Activated CD4-positive, alpha-beta memory T cell treated with anti-CD3 and anti-CD28 coated beads for 36 hours (primary cell): ENCODE measurements at regions of chr1 and their contacts with region 1.

Region 1: DNA sequence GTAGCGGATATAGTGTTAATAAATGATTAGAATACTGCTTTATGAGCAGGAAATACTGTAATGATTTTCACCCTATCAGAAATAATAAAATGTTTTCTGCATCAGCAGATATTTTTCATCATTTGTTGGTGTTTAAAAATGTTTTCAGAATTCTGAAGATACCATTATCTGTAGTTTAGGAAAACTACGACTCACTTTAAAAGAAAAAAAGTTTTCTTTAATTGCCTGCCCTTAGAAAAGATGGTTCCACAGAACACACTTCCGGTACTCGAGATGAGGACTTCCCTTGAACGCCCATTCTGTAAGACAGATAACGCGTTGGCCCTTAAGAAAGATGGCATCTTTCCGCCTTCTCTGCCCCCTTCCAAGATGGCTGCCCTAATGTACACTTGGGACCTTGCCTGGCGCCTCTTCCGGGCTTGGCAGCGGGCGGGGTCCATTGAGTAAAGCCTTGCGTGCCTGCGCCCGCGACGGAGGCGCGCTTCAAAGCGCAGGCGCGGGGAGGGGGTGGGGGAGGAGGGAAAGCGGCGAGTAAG is at the start of gene SZRD1:
- DNase-seq: peak; percentile 98
- H3K4me3 Mint-ChIP-seq: peak within 1 kb of the TSS; percentile 97
- H3K27ac Mint-ChIP-seq: peak within 1 kb of the TSS; percentile 100
- H3K4me1 Mint-ChIP-seq: peaks cover 27% of the 10 kb centered on the region
- H3K27me3 Mint-ChIP-seq: no peaks in the 10 kb centered on the region
- total RNA-seq, gene SZRD1: 185 to 191 TPM

Region 2: DNA sequence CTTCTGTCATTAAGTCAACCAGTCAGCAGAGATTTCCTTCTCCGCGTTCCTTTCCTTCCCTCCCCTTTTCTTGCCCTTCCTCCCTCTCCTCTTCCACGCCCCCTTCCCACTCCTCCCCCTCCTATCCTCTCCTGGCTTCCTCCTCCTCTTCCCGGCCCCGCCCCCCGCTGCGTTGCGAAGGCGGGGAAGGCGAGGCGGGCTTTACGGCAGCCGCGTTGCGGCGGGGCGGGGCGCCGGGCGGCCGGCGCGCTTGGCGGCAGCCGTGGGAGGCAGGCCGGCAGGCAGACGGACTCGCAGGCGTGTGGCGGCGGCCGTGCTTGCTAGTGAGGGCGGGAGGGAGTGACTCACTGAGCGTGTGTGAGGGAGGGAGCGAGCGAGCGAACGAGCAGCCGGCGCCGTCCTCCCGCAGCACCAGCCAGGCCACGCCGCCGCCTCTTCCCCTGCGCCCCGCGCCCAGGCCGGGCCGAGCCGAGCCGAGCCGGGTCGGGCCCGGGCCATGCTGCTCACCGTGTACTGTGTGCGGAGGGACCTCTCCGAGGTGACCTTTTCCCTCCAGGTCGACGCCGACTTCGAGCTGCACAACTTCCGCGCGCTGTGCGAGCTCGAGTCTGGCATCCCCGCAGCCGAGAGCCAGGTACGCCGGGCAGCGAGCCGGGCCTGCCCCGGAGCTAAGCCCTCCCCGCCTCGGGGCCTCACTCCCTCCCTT is 749.5 kb before region 1 on chr1 and contains the start of gene DDI2:
- CTCF ChIA-PET with region 1: no interaction called
- POLR2A ChIA-PET with region 1: no interaction called
- intact Hi-C with region 1: loop called (anchors 10 kb)
- DNase-seq: peak; percentile 96
- H3K4me3 Mint-ChIP-seq: peak within 1 kb of the TSS; percentile 95
- H3K27ac Mint-ChIP-seq: peak within 1 kb of the TSS; percentile 93
- H3K4me1 Mint-ChIP-seq: peaks cover 33% of the 10 kb centered on the region
- H3K27me3 Mint-ChIP-seq: no peaks in the 10 kb centered on the region
- total RNA-seq, gene DDI2: 26.3 to 28.2 TPM

Region 3: GRCh38 chr1:16078925-16079656 is 287.7 kb before region 1 on chr1:
- CTCF ChIA-PET with region 1: interaction called, 13 read pairs
- POLR2A ChIA-PET with region 1: no interaction called
- intact Hi-C with region 1: loop called (anchors 10 kb)
- DNase-seq: peak; percentile 84
- H3K4me3 Mint-ChIP-seq: peak overlapping the region; percentile 60
- H3K27ac Mint-ChIP-seq: no peak overlapping the region
- H3K4me1 Mint-ChIP-seq: peaks cover 9% of the 10 kb centered on the region
- H3K27me3 Mint-ChIP-seq: peaks cover 4% of the 10 kb centered on the region

Region 4: GRCh38 chr1:16212251-16212961 is 154.4 kb before region 1 on chr1 and contains the start of gene ARHGEF19:
- CTCF ChIA-PET with region 1: no interaction called
- POLR2A ChIA-PET with region 1: no interaction called
- intact Hi-C with region 1: no loop called
- DNase-seq: no peak
- H3K4me3 Mint-ChIP-seq: no peak within 1 kb of the TSS
- H3K27ac Mint-ChIP-seq: no peak within 1 kb of the TSS
- H3K4me1 Mint-ChIP-seq: peaks cover 10% of the 10 kb centered on the region
- H3K27me3 Mint-ChIP-seq: peaks cover 2% of the 10 kb centered on the region
- total RNA-seq, gene ARHGEF19: 7.0 to 7.1 TPM

Region 5: DNA sequence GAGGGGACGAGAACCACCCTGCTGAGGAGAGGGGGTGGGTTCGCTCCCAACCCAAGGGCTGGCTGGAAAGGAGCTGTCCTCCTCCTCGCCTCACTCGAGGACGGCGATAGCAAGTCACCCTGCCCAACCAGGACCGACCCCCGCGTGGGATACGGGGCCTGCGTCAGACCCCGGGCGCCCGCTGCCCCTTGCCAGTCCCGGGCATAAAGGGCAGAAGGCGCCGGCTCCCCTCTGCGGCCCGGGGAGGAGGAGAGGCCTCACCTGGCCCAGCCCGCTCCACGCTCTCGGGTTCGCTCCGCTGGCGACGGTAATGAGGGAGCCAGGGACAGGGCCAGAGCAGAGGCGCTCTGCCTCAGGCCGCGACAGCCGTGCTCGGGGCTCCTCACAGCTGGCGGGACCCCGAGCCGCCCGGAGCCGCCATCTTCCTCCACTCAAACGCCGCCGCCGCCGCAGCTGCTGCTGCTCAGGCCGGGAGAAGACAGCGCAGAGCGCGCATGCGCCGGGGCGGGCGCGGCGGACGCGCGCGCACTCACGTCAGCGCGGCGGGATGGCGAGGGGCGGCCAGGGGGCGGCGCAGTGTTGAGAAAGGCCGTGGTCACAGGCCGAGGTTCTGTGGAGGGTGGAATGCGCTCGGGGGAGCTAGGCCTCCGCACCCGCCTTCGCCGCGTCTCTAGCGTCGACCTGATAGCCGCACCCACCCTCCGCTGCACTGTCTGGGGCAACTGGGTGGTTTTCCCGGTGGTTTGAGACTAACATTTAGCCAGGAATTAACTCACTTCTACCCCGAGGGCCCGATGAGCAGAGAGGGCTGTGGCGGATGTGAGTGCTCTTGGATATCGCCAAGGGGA is 14.6 kb before region 1 on chr1 and contains the start of gene FBXO42:
- CTCF ChIA-PET with region 1: interaction called, 79 read pairs
- POLR2A ChIA-PET with region 1: interaction called, 22 read pairs
- intact Hi-C with region 1: loop called (anchors 1 kb)
- DNase-seq: peak; percentile 95
- H3K4me3 Mint-ChIP-seq: peak within 1 kb of the TSS; percentile 88
- H3K27ac Mint-ChIP-seq: peak within 1 kb of the TSS; percentile 91
- H3K4me1 Mint-ChIP-seq: peaks cover 27% of the 10 kb centered on the region
- H3K27me3 Mint-ChIP-seq: no peaks in the 10 kb centered on the region
- total RNA-seq, gene FBXO42: 12.0 to 13.6 TPM

Region 6: GRCh38 chr1:16440470-16441281 is 73.9 kb after region 1 on chr1 and contains the start of gene NECAP2:
- CTCF ChIA-PET with region 1: interaction called, 7 read pairs
- POLR2A ChIA-PET with region 1: interaction called, 6 read pairs
- intact Hi-C with region 1: loop called (anchors 1 kb)
- DNase-seq: peak; percentile 96
- H3K4me3 Mint-ChIP-seq: peak within 1 kb of the TSS; percentile 87
- H3K27ac Mint-ChIP-seq: peak within 1 kb of the TSS; percentile 86
- H3K4me1 Mint-ChIP-seq: peaks cover 37% of the 10 kb centered on the region
- H3K27me3 Mint-ChIP-seq: no peaks in the 10 kb centered on the region
- total RNA-seq, gene NECAP2: 76.4 to 82.0 TPM

Region 7: DNA sequence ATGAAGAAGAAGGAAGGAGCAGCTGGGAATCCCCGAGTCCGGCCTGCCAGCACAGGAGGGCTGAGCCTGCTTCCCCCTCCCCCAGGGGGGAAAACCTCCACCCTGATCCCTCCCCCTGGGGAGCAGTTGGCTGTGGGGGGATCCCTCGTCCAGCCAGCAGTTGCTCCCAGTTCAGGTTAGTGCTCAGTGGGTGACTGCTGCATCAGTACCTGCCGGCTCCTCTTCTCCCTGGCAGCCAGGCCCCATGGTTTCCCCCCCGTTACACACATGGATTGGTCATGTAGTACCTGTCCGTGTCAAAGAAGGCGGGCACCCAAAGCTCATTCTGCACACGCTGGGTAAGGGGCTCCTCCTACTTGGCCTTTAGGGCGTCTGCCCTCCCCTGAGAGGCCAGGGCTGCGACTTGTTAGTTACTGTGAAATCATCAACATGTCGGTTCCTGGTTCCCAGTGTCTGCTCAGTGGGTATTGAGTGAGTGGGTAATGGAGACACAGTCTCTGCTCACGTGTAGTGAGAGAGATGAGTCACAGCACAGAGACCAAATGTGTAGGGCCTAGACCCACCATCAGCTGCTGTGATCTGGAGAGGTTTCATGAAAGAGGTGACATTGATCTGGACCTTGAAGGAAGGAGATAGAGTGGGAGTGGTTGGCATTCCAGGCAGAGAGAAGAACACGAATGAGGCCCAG is 85.2 kb after region 1 on chr1:
- CTCF ChIA-PET with region 1: no interaction called
- POLR2A ChIA-PET with region 1: no interaction called
- intact Hi-C with region 1: no loop called
- DNase-seq: no peak
- H3K4me3 Mint-ChIP-seq: no peak overlapping the region
- H3K27ac Mint-ChIP-seq: peak overlapping the region; percentile 10
- H3K4me1 Mint-ChIP-seq: peaks cover 36% of the 10 kb centered on the region
- H3K27me3 Mint-ChIP-seq: no peaks in the 10 kb centered on the region